ENCODE measurements at regions of chr6 and their contacts with region 1.

Region 1: DNA sequence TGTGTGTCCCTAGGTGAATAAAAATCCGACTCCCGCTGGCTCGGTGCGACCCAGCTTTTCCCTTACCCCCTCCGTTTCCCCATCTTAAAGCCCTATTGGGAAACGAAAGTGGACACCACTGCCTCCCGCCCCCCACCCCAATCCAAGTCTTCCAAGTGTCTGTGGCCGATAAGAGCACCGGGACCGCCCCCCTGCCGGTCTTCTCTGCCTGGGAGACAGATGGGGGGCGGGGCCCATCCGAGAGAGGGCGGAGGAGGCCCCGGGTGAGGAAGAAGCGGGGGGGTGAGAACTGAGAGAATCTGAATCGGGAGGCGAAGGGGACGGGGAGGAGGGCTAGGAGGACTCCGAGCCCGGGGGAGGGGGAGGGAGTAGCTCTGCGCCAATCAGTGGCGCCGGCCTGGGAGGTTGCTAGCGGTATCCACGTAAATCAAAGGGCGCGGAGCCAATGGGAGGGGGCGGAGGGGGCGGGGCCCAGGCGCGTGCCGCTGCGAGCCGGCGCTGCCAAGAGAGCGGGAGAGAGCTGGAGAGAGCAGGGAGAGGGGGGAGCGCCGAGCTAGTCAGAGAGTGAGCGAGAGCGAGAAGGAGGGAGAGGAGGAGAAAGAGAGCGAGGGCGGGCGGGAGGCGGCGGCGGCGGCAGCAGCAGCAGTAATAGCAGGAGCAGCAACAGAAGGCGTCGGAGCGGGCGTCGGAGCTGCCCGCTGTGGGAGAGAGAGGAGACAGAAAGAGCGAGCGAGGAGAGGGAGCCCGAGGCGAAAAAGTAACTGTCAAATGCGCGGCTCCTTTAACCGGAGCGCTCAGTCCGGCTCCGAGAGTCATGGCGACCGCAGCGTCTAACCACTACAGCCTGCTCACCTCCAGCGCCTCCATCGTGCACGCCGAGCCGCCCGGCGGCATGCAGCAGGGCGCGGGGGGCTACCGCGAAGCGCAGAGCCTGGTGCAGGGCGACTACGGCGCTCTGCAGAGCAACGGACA is at the start of gene POU3F2:
- DNase-seq: peak; percentile 76
- H3K27ac ChIP-seq: no peak within 1 kb of the TSS
- CTCF ChIP-seq: no peak

Region 2: DNA sequence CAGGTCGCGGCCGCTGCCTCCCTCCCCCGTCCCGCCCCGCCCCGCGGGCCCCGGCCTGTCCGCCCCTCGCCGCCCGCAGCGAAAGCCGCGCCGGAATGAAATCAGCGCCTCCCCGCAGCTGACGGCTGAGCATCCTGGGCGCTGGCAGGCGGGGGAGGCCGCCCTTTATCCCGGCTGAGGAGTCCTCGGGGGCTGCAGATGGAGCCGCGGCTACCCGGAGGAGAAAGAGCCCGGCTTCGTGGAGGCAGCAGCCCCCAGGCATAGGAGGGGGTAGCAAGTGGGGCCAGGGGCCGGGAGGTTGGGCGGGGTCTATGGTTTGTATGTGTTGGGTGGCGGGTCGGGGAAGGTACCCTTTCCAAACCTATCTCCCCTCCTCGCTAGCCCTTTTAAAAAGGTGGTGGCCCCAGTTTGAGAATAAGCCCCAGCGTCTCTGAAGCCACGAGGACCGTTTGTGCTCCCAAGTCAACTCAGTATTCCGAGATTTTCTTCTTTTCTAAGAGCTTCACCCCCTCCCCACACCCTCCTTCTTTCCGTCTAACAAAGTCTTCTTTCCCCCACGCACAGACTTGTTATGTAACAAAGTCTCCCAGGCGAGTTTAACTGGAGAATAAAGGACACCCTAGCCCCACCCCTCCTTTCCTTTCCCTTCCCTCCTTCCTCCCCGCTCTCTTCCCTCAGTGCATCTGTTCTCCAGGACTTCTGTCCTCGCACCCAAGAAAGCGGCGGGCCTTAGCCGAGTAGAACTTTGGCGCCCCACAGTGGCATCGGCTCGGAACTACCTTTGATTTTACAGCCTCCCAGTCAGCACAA is 11.1 kb after region 1 on chr6:
- CTCF ChIA-PET with region 1: interaction called, 11 read pairs
- POLR2A ChIA-PET with region 1: no interaction called
- DNase-seq: peak; percentile 62
- H3K27ac ChIP-seq: no peak overlapping the region
- CTCF ChIP-seq: peak; percentile 87

Region 3: GRCh38 chr6:99016355-99016754 is 182.0 kb after region 1 on chr6:
- CTCF ChIA-PET with region 1: no interaction called
- POLR2A ChIA-PET with region 1: no interaction called
- DNase-seq: no peak
- H3K27ac ChIP-seq: no peak overlapping the region
- CTCF ChIP-seq: no peak